ENCODE measurements at regions of chr9 and their contacts with region 1.

Region 1: DNA sequence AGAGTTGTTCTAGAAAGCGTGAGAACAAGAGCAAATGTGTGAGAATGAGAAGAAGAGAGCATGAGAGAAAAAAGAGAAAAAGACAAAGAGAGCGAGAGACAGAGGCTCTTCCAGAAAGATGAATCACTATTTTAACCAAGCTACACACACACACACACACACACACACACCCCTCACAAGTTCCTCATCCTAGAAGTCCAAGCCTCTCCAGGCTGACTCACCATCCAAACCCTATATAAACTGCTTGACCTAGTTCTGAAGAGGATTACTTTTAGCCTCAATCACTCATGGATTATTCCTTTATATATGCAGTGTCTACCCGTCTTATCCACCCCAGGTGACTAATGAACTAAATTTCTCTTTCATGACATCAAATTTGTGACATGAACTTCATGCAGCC is 37.6 kb downstream of the C9orf57 start:
- DNase-seq: no peak
- H3K4me3 ChIP-seq: no peak overlapping the region
- H3K27ac ChIP-seq: no peak overlapping the region
- H3K4me1 ChIP-seq: no peaks in the 10 kb centered on the region
- CTCF ChIP-seq: no peak

Region 2: GRCh38 chr9:71285191-71285656 is 737.6 kb before region 1 on chr9:
- CTCF ChIA-PET with region 1: no interaction called
- POLR2A ChIA-PET with region 1: no interaction called
- intact Hi-C with region 1: loop called (anchors 10 kb)
- DNase-seq: peak; percentile 63
- H3K4me3 ChIP-seq: no peak overlapping the region
- H3K27ac ChIP-seq: no peak overlapping the region
- H3K4me1 ChIP-seq: no peaks in the 10 kb centered on the region
- CTCF ChIP-seq: peak; percentile 91

Region 3: GRCh38 chr9:71604197-71605063 is 418.4 kb before region 1 on chr9:
- CTCF ChIA-PET with region 1: no interaction called
- POLR2A ChIA-PET with region 1: interaction called, 3 read pairs
- intact Hi-C with region 1: loop called (anchors 2 kb)
- DNase-seq: peak; percentile 69
- H3K4me3 ChIP-seq: no peak overlapping the region
- H3K27ac ChIP-seq: no peak overlapping the region
- H3K4me1 ChIP-seq: no peaks in the 10 kb centered on the region
- CTCF ChIP-seq: peak; percentile 91

Region 4: DNA sequence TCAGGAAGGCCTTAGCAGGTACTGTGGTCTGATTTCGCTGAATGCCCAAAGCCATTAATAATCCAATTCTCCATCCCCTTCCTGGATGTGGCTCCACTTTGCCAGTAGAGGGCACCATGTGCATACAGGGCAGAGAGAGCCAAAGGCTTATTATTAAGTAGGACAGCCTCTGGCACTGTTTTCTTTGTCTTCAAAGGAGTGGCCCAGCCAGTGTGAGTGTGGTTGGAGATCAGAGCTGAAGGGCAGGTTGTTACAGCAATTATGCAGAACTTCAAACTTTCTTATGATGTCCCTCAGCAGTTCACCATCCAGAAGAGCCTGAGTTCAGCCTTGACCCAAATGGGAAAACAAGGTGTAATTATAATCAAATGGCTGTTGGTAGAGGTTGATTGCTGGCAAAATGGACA is 215.9 kb before region 1 on chr9:
- CTCF ChIA-PET with region 1: interaction called, 11 read pairs
- POLR2A ChIA-PET with region 1: interaction called, 7 read pairs
- intact Hi-C with region 1: loop called (anchors 1 kb)
- DNase-seq: peak; percentile 88
- H3K4me3 ChIP-seq: no peak overlapping the region
- H3K27ac ChIP-seq: no peak overlapping the region
- H3K4me1 ChIP-seq: peaks cover 3% of the 10 kb centered on the region
- CTCF ChIP-seq: peak; percentile 99

Measured in OCI-LY7 (cell line).